T-cell (primary cell): ENCODE measurements at regions of chr7 and their contacts with region 1.

Region 1: DNA sequence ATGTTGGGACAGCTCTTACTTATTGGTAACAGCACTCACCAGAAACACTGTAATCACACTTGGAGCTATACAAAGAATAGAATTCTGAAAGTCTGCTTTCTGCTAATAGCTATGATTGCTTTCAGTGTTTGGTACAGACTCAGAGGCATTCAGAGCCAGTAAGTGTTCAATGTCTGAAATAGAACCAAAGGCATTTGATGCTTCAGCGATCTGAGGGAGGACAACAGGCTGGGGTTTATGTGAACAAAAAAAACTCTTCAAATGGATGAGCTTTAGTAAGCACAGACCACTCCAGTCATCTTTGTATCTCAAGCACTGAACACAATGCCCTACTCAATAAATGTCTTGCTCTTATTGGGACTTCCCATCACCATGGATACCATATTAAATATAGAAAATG is 322.8 kb upstream of the GRM3 start:
- DNase-seq: no peak
- ATAC-seq: no peak
- H3K4me3 ChIP-seq: no peak overlapping the region
- H3K4me3 Mint-ChIP-seq: no peak overlapping the region
- H3K27ac ChIP-seq: no peak overlapping the region
- H3K27ac Mint-ChIP-seq: no peak overlapping the region
- H3K4me1 ChIP-seq: no peaks in the 10 kb centered on the region
- H3K4me1 Mint-ChIP-seq: no peaks in the 10 kb centered on the region
- H3K27me3 ChIP-seq: no peaks in the 10 kb centered on the region
- H3K27me3 Mint-ChIP-seq: no peaks in the 10 kb centered on the region

Region 2: GRCh38 chr7:86372262-86372661 is 51.4 kb after region 1 on chr7:
- CTCF ChIA-PET with region 1: interaction called in 1 of 2 experiments, 10 read pairs
- POLR2A ChIA-PET with region 1: no interaction called
- DNase-seq: no peak
- ATAC-seq: no peak
- H3K4me3 ChIP-seq: no peak overlapping the region
- H3K4me3 Mint-ChIP-seq: no peak overlapping the region
- H3K27ac ChIP-seq: no peak overlapping the region
- H3K27ac Mint-ChIP-seq: no peak overlapping the region
- H3K4me1 ChIP-seq: no peaks in the 10 kb centered on the region
- H3K4me1 Mint-ChIP-seq: no peaks in the 10 kb centered on the region
- H3K27me3 ChIP-seq: no peaks in the 10 kb centered on the region
- H3K27me3 Mint-ChIP-seq: no peaks in the 10 kb centered on the region